H1 (cell line): ENCODE measurements at regions of chr13 and their contacts with region 1.

Region 1: GRCh38 chr13:32581177-32581786 is 5.0 kb upstream of the PDS5B start:
- DNase-seq: no peak
- H3K4me3 ChIP-seq: no peak overlapping the region
- H3K27ac ChIP-seq: no peak overlapping the region
- H3K4me1 ChIP-seq: peaks cover 0 to 2% (median 0%) of the 10 kb centered on the region in 4 experiments; a peak in 1 of 7 replicates
- H3K27me3 ChIP-seq: no peaks in the 10 kb centered on the region
- CTCF ChIP-seq: peak in 2 of 3 experiments; percentile 4 to 15; a peak in 2 of 4 replicates
- EP300 ChIP-seq: no peak
- POLR2A ChIP-seq: no peak
- RAD21 ChIP-seq: peak in 1 of 2 experiments; percentile 36; a peak in 2 of 4 replicates

Region 2: GRCh38 chr13:32354040-32354439 is 227.2 kb before region 1 on chr13:
- CTCF ChIA-PET with region 1: no interaction called
- POLR2A ChIA-PET with region 1: no interaction called
- DNase-seq: no peak
- H3K4me3 ChIP-seq: no peak overlapping the region
- H3K27ac ChIP-seq: no peak overlapping the region
- H3K4me1 ChIP-seq: peaks cover 0 to 4% (median 0%) of the 10 kb centered on the region in 4 experiments; a peak in 2 of 7 replicates
- H3K27me3 ChIP-seq: no peaks in the 10 kb centered on the region
- CTCF ChIP-seq: no peak
- EP300 ChIP-seq: no peak
- POLR2A ChIP-seq: no peak
- RAD21 ChIP-seq: no peak

Region 3: DNA sequence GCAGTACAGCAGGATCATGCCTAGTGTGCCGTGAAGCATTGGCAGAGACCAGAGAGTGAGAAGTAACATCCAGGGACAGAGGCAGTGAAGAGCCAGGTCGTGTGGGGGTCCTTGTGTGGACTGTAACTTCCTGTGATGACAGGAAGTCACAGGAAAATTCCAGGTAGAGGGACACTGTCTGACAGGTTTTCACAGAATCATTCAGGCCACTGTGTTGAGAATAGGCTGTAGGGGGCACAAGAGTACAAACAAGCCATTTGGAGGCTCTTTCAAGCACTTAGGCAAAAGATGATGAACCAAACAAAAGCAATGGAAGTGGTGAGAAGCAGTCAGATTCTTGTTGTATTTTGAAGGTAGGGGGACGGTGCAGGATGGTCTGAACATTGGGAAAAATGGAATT is 199.7 kb before region 1 on chr13:
- CTCF ChIA-PET with region 1: interaction called, 16 read pairs
- POLR2A ChIA-PET with region 1: no interaction called
- DNase-seq: peak in 1 of 2 experiments; percentile 3
- H3K4me3 ChIP-seq: no peak overlapping the region
- H3K27ac ChIP-seq: no peak overlapping the region
- H3K4me1 ChIP-seq: no peaks in the 10 kb centered on the region
- H3K27me3 ChIP-seq: no peaks in the 10 kb centered on the region
- CTCF ChIP-seq: peak in 2 of 3 experiments; percentile 58 to 68; a peak in 3 of 4 replicates
- EP300 ChIP-seq: no peak
- POLR2A ChIP-seq: no peak
- RAD21 ChIP-seq: peak; percentile 79 to 84

Region 4: GRCh38 chr13:32471187-32471922 is 109.9 kb before region 1 on chr13:
- CTCF ChIA-PET with region 1: interaction called, 18 read pairs
- POLR2A ChIA-PET with region 1: no interaction called
- DNase-seq: no peak
- H3K4me3 ChIP-seq: no peak overlapping the region
- H3K27ac ChIP-seq: no peak overlapping the region
- H3K4me1 ChIP-seq: no peaks in the 10 kb centered on the region
- H3K27me3 ChIP-seq: no peaks in the 10 kb centered on the region
- CTCF ChIP-seq: no peak
- EP300 ChIP-seq: no peak
- POLR2A ChIP-seq: no peak
- RAD21 ChIP-seq: no peak

Region 5: GRCh38 chr13:32594157-32594738 is 13.0 kb after region 1 on chr13:
- CTCF ChIA-PET with region 1: interaction called, 15 read pairs
- POLR2A ChIA-PET with region 1: no interaction called
- DNase-seq: no peak
- H3K4me3 ChIP-seq: no peak overlapping the region
- H3K27ac ChIP-seq: no peak overlapping the region
- H3K4me1 ChIP-seq: peaks cover 0 to 5% (median 1%) of the 10 kb centered on the region in 4 experiments; a peak in 1 of 7 replicates
- H3K27me3 ChIP-seq: no peaks in the 10 kb centered on the region
- CTCF ChIP-seq: no peak
- EP300 ChIP-seq: no peak
- POLR2A ChIP-seq: no peak
- RAD21 ChIP-seq: no peak

Region 6: DNA sequence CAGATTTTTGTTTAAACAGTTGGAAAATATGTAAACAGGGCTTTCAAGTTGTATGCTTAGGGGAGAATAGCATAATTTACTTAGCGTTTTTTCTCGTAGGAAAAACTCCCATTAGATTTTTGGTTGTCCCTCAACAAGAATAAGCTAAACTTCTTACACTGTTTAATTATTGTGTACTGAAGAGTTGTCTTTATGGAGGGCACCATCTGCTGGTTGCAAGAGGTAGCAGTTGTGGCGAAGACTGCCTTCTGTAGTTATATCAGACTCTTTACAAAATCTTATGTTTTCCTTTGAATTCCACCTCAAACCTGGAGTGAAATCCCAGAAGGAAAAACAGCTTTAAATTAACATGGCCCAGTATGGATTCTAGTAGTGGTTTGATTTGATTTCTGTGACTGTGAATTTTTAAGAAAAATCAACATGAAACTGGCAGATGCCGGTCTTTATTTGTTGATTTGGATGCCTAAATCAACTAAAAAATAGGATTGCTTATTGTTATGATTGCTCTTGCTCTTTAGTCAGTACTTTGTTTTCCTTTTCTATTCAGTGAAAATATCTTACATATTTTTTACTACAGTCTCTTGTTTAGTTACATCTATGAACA is 58.3 kb after region 1 on chr13:
- CTCF ChIA-PET with region 1: interaction called, 17 read pairs
- POLR2A ChIA-PET with region 1: interaction called, 5 read pairs
- DNase-seq: no peak
- H3K4me3 ChIP-seq: no peak overlapping the region
- H3K27ac ChIP-seq: no peak overlapping the region
- H3K4me1 ChIP-seq: no peaks in the 10 kb centered on the region
- H3K27me3 ChIP-seq: no peaks in the 10 kb centered on the region
- CTCF ChIP-seq: peak in 2 of 3 experiments; percentile 62 to 69; a peak in 3 of 4 replicates
- EP300 ChIP-seq: no peak
- POLR2A ChIP-seq: no peak
- RAD21 ChIP-seq: peak; percentile 66 to 73

Region 7: GRCh38 chr13:32734511-32734910 is 153.2 kb after region 1 on chr13:
- CTCF ChIA-PET with region 1: no interaction called
- POLR2A ChIA-PET with region 1: no interaction called
- DNase-seq: no peak
- H3K4me3 ChIP-seq: no peak overlapping the region
- H3K27ac ChIP-seq: no peak overlapping the region
- H3K4me1 ChIP-seq: no peaks in the 10 kb centered on the region
- H3K27me3 ChIP-seq: no peaks in the 10 kb centered on the region
- CTCF ChIP-seq: no peak
- EP300 ChIP-seq: no peak
- POLR2A ChIP-seq: no peak
- RAD21 ChIP-seq: no peak

Region 8: DNA sequence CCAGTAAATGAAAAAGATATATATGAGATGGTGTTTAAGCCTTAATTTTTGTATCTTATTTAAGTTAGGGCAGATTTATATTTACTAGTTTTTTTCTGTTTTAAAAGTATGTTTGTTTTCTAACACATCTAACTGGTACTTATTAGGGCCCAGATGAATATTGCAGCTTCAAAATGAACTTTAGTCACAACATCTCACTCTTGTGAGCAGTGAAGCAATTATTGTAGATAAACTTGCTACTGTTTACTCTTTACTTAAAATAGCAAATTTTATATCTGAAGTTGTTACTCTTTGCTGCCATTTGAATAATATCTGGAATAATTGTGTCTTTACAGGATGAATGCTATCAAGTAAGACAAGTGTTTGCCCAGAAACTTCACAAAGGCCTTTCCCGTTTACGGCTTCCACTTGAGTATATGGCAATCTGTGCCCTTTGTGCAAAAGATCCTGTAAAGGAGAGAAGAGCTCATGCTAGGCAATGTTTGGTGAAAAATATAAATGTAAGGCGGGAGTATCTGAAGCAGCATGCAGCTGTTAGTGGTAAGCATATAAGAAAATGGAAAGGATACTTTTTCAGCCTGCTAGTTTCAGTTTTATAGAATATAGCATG is 171.8 kb after region 1 on chr13:
- CTCF ChIA-PET with region 1: no interaction called
- POLR2A ChIA-PET with region 1: no interaction called
- DNase-seq: no peak
- H3K4me3 ChIP-seq: no peak overlapping the region
- H3K27ac ChIP-seq: no peak overlapping the region
- H3K4me1 ChIP-seq: no peaks in the 10 kb centered on the region
- H3K27me3 ChIP-seq: no peaks in the 10 kb centered on the region
- CTCF ChIP-seq: no peak
- EP300 ChIP-seq: no peak
- POLR2A ChIP-seq: no peak
- RAD21 ChIP-seq: no peak